ENCODE measurements at regions of chr1 and their contacts with region 1.

Region 1: DNA sequence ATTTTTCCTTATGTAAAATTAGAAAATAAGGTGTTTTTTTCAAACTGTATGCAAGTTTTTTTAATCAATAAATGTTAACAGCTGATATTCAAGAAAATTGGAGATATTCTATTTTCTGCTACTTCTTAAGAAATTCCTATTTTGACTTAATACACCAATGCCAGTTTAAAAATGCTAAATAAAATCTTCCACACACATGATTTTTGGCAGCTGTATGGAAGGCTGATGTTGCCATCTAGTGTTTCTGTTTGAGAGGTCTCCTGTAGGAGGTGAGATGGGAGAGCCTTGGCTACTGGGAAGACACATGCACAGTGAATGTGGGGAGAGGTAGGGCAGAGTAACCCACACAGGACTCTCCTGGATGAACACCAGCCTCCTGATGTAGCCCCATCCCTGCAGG is 29.2 kb upstream of the OR2B11 start:
- DNase-seq: peak; percentile 91
- ATAC-seq: peak; percentile 88
- H3K4me3 ChIP-seq: no peak overlapping the region
- H3K27ac ChIP-seq: no peak overlapping the region
- H3K4me1 ChIP-seq: peaks cover 15% of the 10 kb centered on the region
- H3K27me3 ChIP-seq: peaks cover 42% of the 10 kb centered on the region
- CTCF ChIP-seq: peak; percentile 99

Region 2: DNA sequence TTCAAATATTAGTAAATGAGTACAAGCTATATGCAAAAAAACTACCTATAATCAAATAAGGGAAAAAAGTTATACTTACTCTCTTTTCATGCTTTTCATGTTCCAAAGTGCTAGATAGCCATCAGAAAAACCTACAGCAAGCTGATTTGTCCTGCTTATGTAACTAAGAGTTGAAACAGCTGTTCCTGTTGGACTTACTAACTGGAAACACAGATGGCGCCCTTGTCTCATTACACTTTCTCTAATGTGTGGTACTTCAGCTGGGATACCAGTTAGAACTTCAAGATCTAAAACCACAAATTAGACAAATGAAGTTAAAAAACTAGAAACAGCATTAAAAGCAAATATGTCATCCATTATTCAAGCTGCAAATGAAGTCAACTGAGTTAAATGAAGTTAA is 579.6 kb before region 1 on chr1:
- CTCF ChIA-PET with region 1: no interaction called
- POLR2A ChIA-PET with region 1: no interaction called
- intact Hi-C with region 1: loop called (anchors 10 kb)
- DNase-seq: peak; percentile 57
- ATAC-seq: peak; percentile 62
- H3K4me3 ChIP-seq: no peak overlapping the region
- H3K27ac ChIP-seq: peak overlapping the region; percentile 60
- H3K4me1 ChIP-seq: peaks cover 11% of the 10 kb centered on the region
- H3K27me3 ChIP-seq: no peaks in the 10 kb centered on the region
- CTCF ChIP-seq: peak; percentile 68

Region 3: DNA sequence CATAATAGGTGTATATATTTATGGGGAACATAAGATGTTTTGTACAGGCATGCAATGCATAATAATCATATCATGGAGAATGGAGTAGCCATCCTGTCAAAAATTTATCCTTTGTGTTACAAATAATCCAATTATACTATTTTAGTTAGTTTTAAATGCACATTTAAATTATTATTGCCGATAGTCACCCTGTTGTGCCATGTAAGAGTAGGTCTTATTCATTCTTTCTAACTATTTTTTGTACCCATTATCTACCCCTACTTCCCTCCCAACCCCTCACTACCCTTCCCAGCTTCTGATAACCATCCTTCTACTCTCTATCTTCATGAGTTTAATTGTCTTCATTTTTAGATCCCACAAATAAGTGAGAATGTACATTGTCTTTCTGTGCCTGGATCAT is 239.5 kb before region 1 on chr1:
- CTCF ChIA-PET with region 1: no interaction called
- POLR2A ChIA-PET with region 1: no interaction called
- intact Hi-C with region 1: no loop called
- DNase-seq: no peak
- ATAC-seq: no peak
- H3K4me3 ChIP-seq: no peak overlapping the region
- H3K27ac ChIP-seq: no peak overlapping the region
- H3K4me1 ChIP-seq: no peaks in the 10 kb centered on the region
- H3K27me3 ChIP-seq: no peaks in the 10 kb centered on the region
- CTCF ChIP-seq: no peak

Region 4: GRCh38 chr1:247373721-247374141 is 113.3 kb before region 1 on chr1:
- CTCF ChIA-PET with region 1: interaction called, 7 read pairs
- POLR2A ChIA-PET with region 1: no interaction called
- intact Hi-C with region 1: loop called (anchors 1 kb)
- DNase-seq: no peak
- ATAC-seq: no peak
- H3K4me3 ChIP-seq: no peak overlapping the region
- H3K27ac ChIP-seq: no peak overlapping the region
- H3K4me1 ChIP-seq: peaks cover 5% of the 10 kb centered on the region; the same call in 1 of the 2 replicates
- H3K27me3 ChIP-seq: no peaks in the 10 kb centered on the region
- CTCF ChIP-seq: peak; percentile 40

Region 5: GRCh38 chr1:247390116-247390791 is 96.8 kb before region 1 on chr1:
- CTCF ChIA-PET with region 1: interaction called, 11 read pairs
- POLR2A ChIA-PET with region 1: interaction called, 12 read pairs
- intact Hi-C with region 1: loop called (anchors 1 kb)
- DNase-seq: peak; percentile 98
- ATAC-seq: peak; percentile 84
- H3K4me3 ChIP-seq: peak overlapping the region; percentile 26; the same call in 1 of the 2 replicates
- H3K27ac ChIP-seq: no peak overlapping the region
- H3K4me1 ChIP-seq: peaks cover 24% of the 10 kb centered on the region
- H3K27me3 ChIP-seq: no peaks in the 10 kb centered on the region
- CTCF ChIP-seq: peak; percentile 99

Region 6: DNA sequence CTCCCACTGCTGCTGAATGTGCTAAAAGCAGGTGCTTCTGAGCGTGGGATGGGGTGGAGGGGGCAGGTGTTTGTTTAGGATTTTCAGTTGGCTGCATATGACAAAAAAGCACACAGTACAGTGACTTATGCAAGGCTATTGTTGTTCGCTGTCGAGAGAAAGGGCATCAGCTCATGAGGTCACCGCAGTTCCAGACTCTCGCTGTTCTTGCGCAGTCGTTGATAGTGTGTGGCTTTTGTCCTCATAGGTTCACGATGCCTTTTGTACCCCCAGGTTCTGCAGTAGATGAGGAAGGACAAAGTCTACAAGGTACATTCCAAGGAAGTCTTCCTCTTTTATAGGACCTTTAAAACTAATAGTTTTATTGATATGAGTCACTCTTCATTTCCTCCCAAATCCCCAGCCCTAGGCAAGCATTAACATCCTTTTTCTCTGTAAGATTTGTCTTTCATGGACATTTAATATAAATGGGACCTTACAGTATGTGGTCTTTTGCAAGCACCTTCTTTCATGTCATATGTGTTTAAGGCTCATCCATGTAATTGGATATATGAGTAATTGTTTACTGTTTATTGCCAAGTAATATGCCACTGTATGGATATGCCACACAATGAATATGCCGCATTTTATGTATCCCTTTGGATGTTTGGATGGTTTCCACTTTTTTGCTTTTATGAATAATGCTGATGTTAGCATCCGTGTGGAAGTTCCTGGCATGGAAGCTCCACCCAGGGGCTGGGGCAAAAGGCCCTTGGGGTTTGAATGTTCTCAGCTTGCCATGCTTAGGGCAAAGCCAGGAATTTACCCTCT is 85.5 kb before region 1 on chr1:
- CTCF ChIA-PET with region 1: no interaction called
- POLR2A ChIA-PET with region 1: no interaction called
- intact Hi-C with region 1: loop called (anchors 1 kb)
- DNase-seq: peak; percentile 98
- ATAC-seq: peak; percentile 78
- H3K4me3 ChIP-seq: peak overlapping the region; percentile 25
- H3K27ac ChIP-seq: peak overlapping the region; percentile 81
- H3K4me1 ChIP-seq: peaks cover 31% of the 10 kb centered on the region
- H3K27me3 ChIP-seq: no peaks in the 10 kb centered on the region
- CTCF ChIP-seq: no peak

Region 7: DNA sequence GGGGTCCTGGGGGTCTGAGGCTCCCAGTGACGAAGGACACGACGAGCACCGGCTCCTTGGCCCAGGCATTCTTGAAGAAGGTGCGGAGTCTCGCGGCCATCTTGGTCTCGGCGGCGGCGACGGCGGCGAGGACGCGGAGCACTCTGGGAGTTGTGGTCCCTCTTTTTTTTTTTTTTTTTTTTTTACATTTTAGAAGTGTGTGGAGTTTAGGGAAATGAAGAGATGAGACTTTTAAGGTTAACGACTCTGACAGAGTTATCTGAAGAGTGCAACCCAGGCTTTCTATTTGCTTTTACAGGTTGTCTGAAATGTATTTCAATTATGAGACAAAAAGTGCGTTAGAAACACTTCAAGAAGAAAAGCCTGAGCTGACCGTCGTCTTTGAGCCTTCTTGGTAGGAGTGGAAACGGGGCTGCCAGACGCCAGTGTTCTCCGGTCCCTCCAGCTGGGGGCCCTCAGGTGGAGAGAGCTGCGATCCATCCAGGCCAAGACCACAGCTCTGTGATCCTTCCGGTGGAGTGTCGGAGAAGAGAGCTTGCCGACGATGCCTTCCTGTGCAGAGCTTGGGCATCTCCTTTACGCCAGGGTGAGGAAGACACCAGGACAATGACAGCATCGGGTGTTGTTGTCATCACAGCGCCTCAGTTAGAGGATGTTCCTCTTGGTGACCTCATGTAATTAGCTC is 38.8 kb before region 1 on chr1:
- CTCF ChIA-PET with region 1: interaction called, 3 read pairs
- POLR2A ChIA-PET with region 1: no interaction called
- intact Hi-C with region 1: loop called (anchors 2 kb)
- DNase-seq: peak; percentile 71
- ATAC-seq: peak; percentile 85
- H3K4me3 ChIP-seq: peak overlapping the region; percentile 64
- H3K27ac ChIP-seq: no peak overlapping the region
- H3K4me1 ChIP-seq: peaks cover 6% of the 10 kb centered on the region; the same call in 1 of the 2 replicates
- H3K27me3 ChIP-seq: peaks cover 20% of the 10 kb centered on the region
- CTCF ChIP-seq: 0 out of 2 replicates have a peak, but pooled peaks have one; percentile 39

Measured in PC-3 (cell line).